Activated CD4-positive, alpha-beta T cell treated with anti-CD3 and anti-CD28 coated beads for 36 hours (primary cell): ENCODE measurements at regions of chr15 and their contacts with region 1.

Region 1: DNA sequence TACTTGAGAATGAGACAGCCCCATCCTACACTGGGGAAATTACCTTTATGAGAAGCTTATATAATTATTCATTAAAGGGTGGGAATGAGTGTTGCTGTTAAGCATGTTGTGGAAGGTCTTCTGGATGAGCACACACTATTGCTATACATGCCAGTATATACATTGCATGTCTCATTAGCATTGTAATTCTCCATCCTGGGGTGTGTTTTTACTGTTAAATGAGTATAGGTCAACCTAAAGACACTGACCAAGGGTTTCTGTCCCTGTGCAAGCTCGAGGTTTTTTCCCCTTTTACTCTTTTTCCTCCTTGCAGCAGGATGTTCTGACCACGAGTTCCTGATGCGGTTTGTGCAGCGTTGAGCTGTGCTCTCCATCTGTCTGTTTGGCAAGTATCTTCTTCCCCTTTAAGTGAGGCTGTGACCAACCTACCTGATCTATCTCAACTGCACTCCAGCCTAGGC is 7.2 kb upstream of the IVD start:
- DNase-seq: peak; percentile 69
- ATAC-seq: peak; percentile 93
- H3K4me3 Mint-ChIP-seq: peak overlapping the region; percentile 3
- H3K27ac Mint-ChIP-seq: peak overlapping the region; percentile 65
- H3K4me1 Mint-ChIP-seq: peaks cover 22% of the 10 kb centered on the region
- H3K27me3 Mint-ChIP-seq: no peaks in the 10 kb centered on the region

Region 2: GRCh38 chr15:40421246-40422157 is 23.1 kb after region 1 on chr15:
- CTCF ChIA-PET with region 1: interaction called, 11 read pairs
- POLR2A ChIA-PET with region 1: no interaction called
- intact Hi-C with region 1: no loop called
- DNase-seq: peak; percentile 91
- ATAC-seq: peak; percentile 98
- H3K4me3 Mint-ChIP-seq: no peak overlapping the region
- H3K27ac Mint-ChIP-seq: no peak overlapping the region
- H3K4me1 Mint-ChIP-seq: no peaks in the 10 kb centered on the region
- H3K27me3 Mint-ChIP-seq: no peaks in the 10 kb centered on the region